Ascending aorta (tissue), 2 donors: ENCODE measurements at regions of chrX and their contacts with region 1.

Region 1: DNA sequence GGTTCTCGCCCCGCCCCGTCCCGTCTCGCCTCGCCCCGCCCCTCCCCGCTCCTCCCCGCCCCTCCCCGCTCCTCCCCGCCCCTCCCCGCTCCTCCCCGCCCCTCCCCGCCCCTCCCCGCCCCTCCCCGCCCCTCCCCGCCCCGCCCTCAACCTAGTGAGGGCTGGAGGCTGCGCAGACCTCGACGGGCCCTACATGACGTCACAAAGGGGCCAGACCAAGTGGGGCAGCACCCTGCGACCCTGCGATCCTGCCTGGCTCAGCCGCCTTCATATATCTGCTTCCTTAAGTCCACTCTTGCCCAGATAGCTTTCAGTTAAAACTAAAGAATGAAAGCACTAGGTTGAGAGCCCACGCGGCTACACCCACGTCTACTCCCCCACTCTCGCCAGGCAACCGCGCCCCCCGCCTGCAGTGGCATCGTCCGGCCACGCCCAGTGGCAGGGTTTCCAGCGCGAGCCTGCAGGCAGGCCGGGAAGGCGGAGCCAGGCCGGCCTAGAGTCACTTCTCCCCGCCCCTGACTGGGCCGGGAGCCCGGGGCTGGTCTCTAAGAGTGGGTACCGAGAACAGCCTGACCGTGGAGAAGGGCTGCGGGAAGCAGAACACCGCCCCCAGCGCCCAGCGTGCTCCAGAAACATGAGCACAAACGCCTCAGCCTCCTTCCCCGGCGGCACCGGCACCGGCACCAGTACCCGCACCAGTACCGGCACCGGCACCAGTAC is 1.5 kb upstream of the MAOA start:
- DNase-seq: peak; percentile 71 to 96
- H3K4me3 ChIP-seq: peak overlapping the region; percentile 52 to 83
- H3K27ac ChIP-seq: peak overlapping the region; percentile 87 to 88
- H3K4me1 ChIP-seq: no peaks in the 10 kb centered on the region
- H3K27me3 ChIP-seq: no peaks in the 10 kb centered on the region
- CTCF ChIP-seq: peak; percentile 13 to 40 (median 37)

Region 2: GRCh38 chrX:43589735-43590134 is 64.9 kb before region 1 on chrX:
- intact Hi-C with region 1: loop called (anchors 1 kb)
- DNase-seq: no peak
- H3K4me3 ChIP-seq: peak overlapping the region in 1 of 2 donors; percentile 6
- H3K27ac ChIP-seq: peak overlapping the region; percentile 64 to 71
- H3K4me1 ChIP-seq: peaks cover 0 to 3% of the 10 kb centered on the region in 2 donors
- H3K27me3 ChIP-seq: no peaks in the 10 kb centered on the region
- CTCF ChIP-seq: no peak

Region 3: GRCh38 chrX:43618361-43619205 is 36.0 kb before region 1 on chrX:
- intact Hi-C with region 1: no loop called
- DNase-seq: no peak
- H3K4me3 ChIP-seq: no peak overlapping the region
- H3K27ac ChIP-seq: no peak overlapping the region
- H3K4me1 ChIP-seq: no peaks in the 10 kb centered on the region
- H3K27me3 ChIP-seq: no peaks in the 10 kb centered on the region
- CTCF ChIP-seq: no peak

Region 4: GRCh38 chrX:43703211-43703791 is 48.7 kb after region 1 on chrX:
- intact Hi-C with region 1: loop called (anchors 2 kb)
- DNase-seq: no peak
- H3K4me3 ChIP-seq: no peak overlapping the region
- H3K27ac ChIP-seq: peak overlapping the region; percentile 65 to 76
- H3K4me1 ChIP-seq: peaks cover 0 to 32% of the 10 kb centered on the region in 2 donors
- H3K27me3 ChIP-seq: no peaks in the 10 kb centered on the region
- CTCF ChIP-seq: no peak

Region 5: DNA sequence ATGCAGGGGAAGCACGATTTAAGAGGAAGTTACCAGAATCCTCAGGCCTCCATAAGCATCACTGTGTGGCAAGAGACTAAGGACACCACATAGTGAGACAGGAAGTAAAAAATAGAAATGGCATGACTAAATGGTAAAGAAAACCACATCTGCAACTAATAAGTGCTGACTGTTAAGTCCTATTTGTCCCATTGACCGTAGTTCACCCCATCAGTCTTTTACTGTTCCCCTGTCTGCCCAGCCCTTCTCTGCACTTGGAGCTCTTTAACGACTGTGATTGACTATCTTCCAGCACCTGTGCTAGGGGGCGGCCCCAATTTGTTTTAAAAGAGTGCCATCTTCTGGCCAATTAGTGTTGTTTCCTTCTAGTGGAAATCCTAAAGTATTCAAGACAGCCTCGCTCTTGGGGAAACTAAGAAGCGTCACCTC is 95.7 kb after region 1 on chrX:
- intact Hi-C with region 1: loop called (anchors 2 kb)
- DNase-seq: peak in 1 of 2 donors; percentile 72
- H3K4me3 ChIP-seq: no peak overlapping the region
- H3K27ac ChIP-seq: no peak overlapping the region
- H3K4me1 ChIP-seq: no peaks in the 10 kb centered on the region
- H3K27me3 ChIP-seq: no peaks in the 10 kb centered on the region
- CTCF ChIP-seq: peak; percentile 44 to 60 (median 51)